CD14-positive monocyte (primary cell): ENCODE measurements at regions of chr4 and their contacts with region 1.

Region 1: GRCh38 chr4:75973766-75974165 is 17.0 kb downstream of the SDAD1 start:
- DNase-seq: no peak
- H3K4me3 ChIP-seq: no peak overlapping the region
- H3K4me3 Mint-ChIP-seq: no peak overlapping the region
- H3K27ac ChIP-seq: no peak overlapping the region
- H3K27ac Mint-ChIP-seq: no peak overlapping the region
- H3K4me1 ChIP-seq: peaks cover 8 to 9% of the 10 kb centered on the region in 2 donors
- H3K4me1 Mint-ChIP-seq: peaks cover 10% of the 10 kb centered on the region
- H3K27me3 ChIP-seq: no peaks in the 10 kb centered on the region
- H3K27me3 Mint-ChIP-seq: no peaks in the 10 kb centered on the region
- CTCF ChIP-seq: no peak

Region 2: DNA sequence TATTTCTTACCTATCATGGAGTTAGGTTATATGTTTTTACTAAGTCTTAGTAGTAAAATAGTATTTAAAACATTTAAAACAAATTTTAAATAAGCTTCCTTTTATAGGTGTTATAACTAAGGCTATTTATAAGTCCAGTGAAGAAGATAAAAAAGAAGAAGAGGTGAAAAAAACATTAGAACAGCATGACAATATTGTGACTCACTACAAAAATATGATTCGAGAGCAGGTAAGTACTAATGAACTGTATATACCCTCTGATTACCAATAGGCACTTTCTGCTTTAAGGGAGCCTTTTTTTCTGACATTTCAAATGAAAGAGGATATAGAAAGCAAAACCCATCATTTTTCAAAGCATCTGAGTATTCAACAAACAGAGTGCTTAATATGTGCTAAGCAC is 172.8 kb before region 1 on chr4:
- intact Hi-C with region 1: loop called in 1 of 2 experiments (anchors 10 kb)
- DNase-seq: no peak
- H3K4me3 ChIP-seq: no peak overlapping the region
- H3K4me3 Mint-ChIP-seq: no peak overlapping the region
- H3K27ac ChIP-seq: no peak overlapping the region
- H3K27ac Mint-ChIP-seq: no peak overlapping the region
- H3K4me1 ChIP-seq: no peaks in the 10 kb centered on the region
- H3K4me1 Mint-ChIP-seq: no peaks in the 10 kb centered on the region
- H3K27me3 ChIP-seq: no peaks in the 10 kb centered on the region
- H3K27me3 Mint-ChIP-seq: no peaks in the 10 kb centered on the region
- CTCF ChIP-seq: no peak

Region 3: DNA sequence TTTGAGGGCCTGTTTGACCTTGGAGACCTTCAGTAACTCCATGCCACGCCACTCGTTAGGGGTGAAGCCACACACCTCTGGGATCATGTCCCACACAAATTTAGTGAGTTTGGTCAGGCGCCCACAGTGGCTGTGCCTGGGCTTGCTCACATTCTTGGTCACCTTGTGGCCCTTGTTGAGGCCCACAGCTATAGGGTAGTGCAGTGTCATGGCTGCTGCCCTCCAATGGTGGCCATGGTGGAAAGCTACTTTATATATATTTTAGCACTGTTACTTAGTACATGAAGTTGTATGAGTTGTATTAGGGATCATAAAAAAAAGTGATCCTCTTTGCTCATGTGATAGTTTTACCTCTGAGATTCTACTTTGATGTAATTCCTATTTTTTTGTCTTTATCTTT is 63.1 kb after region 1 on chr4:
- intact Hi-C with region 1: no loop called
- DNase-seq: no peak
- H3K4me3 ChIP-seq: no peak overlapping the region
- H3K4me3 Mint-ChIP-seq: no peak overlapping the region
- H3K27ac ChIP-seq: no peak overlapping the region
- H3K27ac Mint-ChIP-seq: no peak overlapping the region
- H3K4me1 ChIP-seq: peaks cover 11 to 15% of the 10 kb centered on the region in 2 donors
- H3K4me1 Mint-ChIP-seq: peaks cover 17% of the 10 kb centered on the region
- H3K27me3 ChIP-seq: peaks cover 2% of the 10 kb centered on the region in 2 donors
- H3K27me3 Mint-ChIP-seq: peaks cover 0 to 3% (median 2%) of the 10 kb centered on the region in 3 donors
- CTCF ChIP-seq: no peak